ENCODE measurements at regions of chr16 and their contacts with region 1.

Region 1: DNA sequence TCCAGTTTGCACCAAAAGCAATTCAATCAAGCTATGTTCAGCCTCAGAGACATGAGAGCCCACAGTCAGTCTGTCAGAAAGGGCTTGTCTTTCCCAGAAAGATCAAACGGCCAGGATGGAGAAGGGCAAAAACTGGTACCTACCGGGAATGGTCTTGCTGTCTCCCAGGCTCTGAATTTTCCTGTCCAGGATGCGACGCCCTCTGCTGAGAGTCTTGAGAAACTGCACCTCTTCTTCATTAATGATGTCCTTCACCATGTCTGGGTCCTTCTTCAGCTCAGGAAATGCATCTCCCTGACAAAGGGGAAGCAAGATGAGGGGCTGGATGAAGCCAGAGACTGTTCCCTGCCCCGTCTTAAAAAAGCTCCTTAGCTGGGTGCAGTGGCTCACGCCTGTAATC is 15.8 kb upstream of the EXOSC6 start:
- DNase-seq: no peak
- H3K4me3 ChIP-seq: no peak overlapping the region
- CTCF ChIP-seq: peak; percentile 57

Region 2: DNA sequence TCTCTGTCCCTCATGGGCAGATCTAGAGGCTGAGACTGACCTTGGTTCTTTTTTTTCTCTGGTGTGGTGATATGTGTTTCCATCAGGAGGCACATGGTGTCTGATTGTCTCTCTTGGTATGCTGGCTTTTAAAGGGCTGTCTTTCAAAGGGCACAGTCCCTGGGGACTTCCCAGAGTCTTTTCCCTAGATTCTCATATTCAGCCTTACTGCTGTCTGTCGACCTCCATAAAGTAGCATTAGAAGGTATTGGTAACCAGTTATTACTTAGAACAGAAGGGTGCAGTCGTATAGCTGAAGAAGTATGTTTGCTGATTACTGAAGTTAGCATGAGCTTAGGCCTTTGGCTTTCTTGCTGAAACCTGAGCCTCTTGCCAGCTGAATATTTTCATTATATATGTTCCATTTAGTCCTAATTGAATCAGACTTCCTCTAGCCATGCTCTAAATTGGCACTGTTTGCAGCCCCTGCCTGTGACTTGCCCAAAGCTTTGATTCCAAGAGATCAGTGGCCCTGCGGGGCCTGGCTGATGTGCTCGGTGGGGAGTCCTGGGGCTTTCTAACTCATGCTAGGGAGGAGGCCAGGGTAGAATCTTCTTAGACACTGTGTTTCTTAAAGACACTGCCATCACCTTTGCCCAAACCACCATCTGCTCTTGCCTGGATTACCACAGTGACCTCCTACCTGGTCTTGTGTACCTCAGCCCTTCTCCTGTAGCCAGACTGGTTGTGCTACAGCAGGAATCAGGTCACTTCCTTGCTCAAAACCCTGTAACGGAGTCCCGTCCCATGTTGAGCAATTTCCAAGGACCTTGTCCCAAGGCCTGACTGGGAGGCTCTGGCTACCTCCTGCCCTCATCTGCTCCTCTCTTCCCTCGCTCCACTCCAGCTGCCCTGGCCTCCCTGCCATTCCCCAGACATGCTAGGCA is 433.9 kb before region 1 on chr16:
- CTCF ChIA-PET with region 1: no interaction called
- POLR2A ChIA-PET with region 1: no interaction called
- DNase-seq: no peak
- H3K4me3 ChIP-seq: no peak overlapping the region
- CTCF ChIP-seq: no peak

Region 3: GRCh38 chr16:70289229-70290098 is 21.9 kb after region 1 on chr16 and contains the start of gene AARS1:
- CTCF ChIA-PET with region 1: interaction called, 10 read pairs
- POLR2A ChIA-PET with region 1: interaction called, 3 read pairs
- DNase-seq: peak; percentile 99
- H3K4me3 ChIP-seq: peak within 1 kb of the TSS; percentile 85
- CTCF ChIP-seq: no peak

Region 4: DNA sequence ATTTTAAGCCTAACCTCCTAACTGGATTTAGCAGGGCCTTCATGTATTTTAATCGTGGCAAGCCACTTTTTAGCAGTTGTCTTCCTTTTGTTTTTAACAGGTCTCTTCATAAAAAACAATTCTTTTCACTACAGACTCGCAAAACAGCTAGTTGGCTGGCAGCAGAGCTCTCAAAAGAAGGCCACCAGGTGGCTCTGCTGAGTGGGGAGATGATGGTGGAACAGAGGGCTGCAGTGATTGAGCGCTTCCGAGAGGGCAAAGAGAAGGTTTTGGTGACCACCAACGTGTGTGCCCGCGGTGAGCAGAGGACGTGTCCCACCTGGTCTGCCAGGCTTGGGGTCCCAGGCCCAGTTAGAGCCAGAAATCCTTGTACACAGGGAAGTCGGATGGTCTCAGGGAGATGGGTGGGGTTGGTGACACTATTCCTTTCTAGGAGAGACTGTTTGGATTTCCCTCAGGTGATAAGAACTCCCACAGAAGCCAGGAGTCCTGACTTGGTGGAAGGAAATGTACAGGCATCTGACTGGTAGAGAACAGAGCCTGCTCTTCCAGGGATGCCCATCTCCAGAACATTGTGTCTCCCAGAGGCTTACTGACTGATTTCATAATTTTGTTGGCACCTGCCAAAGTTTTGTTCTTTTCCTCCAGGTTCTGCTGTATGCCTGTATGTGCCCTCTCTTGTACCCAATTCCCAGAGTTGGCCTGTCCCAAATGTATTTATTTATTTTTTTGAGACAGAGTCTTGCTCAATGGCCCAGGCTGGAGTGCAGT is 64.3 kb after region 1 on chr16:
- CTCF ChIA-PET with region 1: no interaction called
- POLR2A ChIA-PET with region 1: no interaction called
- DNase-seq: no peak
- H3K4me3 ChIP-seq: no peak overlapping the region
- CTCF ChIP-seq: peak; percentile 44

Region 5: DNA sequence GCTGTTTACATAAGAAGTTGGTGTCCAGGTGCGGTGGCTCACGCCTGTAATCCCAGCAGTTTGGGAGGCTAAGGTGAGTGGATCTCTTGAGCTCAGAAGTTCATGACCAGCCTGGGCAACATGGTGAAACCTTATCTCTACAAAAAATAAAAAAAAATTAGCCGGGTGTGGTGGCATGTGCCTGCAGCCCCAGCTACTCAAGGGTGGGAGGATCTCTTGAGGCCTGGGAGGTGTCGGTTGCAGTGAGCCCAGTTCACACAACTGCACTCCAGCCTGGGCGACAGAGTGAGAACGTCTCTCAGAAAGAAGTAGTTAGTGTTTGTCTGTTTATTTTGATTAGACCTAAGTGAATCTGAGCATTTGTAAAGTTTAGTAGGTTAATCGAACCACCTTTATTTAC is 92.0 kb after region 1 on chr16:
- CTCF ChIA-PET with region 1: no interaction called
- POLR2A ChIA-PET with region 1: no interaction called
- DNase-seq: no peak
- H3K4me3 ChIP-seq: no peak overlapping the region
- CTCF ChIP-seq: no peak

Measured in AG04449 (cell line).